ENCODE measurements at regions of chr10 and their contacts with region 1.

Region 1: DNA sequence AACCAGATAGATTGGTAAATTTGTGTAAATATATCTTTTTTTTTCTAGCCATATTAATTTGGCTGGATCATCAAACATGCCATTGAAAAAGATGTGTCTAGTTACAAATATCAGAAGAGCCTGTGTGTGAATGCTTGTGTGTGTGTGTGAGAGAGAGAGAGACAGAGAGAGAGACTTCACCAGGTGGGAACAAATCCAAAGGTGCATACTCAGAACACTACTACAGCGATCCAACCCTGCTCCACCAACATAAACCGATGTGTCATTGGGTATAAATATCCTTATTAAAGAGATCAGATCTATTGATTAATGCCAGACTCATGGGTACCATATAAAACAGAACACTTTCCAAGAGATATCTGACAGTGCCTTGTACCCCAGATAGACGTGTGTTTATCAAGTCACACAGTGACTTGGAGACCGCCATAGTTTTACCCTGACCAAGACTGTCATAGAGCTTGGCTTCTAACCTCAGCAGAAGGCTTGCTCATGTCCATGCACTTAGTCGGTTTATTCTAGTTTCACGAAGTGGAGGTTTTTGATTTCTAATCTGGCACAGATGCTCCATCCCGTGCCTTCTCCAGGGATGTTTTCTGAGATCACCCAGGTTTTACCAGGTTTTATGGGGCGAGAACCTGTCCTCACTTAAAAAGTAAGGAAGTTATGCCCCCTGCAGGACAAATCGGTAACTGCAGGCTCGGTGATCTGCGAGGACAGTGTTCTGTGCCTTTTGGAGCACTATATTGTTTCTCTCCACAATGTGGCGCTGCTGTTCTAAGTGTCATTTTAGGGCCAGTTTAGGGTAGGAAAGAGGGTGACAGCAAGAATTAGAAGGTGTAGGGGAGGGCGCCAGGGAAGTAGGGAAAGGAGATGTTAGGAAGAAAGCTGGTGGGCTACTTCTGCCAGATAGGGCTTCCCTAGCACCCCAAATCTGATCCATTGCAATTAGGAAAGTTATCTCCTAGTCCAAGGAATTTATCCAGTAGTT is 29.3 kb upstream of the WNT8B start:
- DNase-seq: peak; percentile 30
- H3K4me3 ChIP-seq: no peak overlapping the region
- H3K27ac ChIP-seq: no peak overlapping the region
- H3K4me1 ChIP-seq: peaks cover 0 to 20% (median 2%) of the 10 kb centered on the region in 3 donors
- H3K27me3 ChIP-seq: no peaks in the 10 kb centered on the region
- CTCF ChIP-seq: peak; percentile 93 to 100 (median 100)
- POLR2A ChIP-seq: no peak

Region 2: DNA sequence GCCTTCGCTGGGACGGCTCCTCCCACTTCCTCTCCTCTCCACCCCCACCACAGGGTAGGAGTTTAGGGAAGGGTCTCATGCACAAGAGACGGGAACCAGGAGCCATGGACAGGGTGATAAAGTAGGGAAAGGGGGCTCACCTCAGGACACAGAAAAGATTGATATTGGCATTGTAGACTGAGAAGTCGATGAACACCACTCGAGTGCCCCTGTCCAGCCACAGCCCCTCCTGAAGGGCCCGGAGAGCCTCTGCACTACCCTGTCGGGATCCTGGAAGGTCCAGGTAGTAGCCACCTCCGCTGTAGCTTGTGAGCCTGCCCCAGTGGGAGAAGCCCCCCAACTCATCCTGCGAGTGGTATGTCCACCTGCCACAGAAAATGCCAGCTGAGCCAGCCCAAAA is 136.3 kb before region 1 on chr10:
- intact Hi-C with region 1: no loop called
- DNase-seq: no peak
- H3K4me3 ChIP-seq: no peak overlapping the region
- H3K27ac ChIP-seq: no peak overlapping the region
- H3K4me1 ChIP-seq: no peaks in the 10 kb centered on the region
- H3K27me3 ChIP-seq: peaks cover 0 to 59% (median 0%) of the 10 kb centered on the region in 4 donors
- CTCF ChIP-seq: no peak
- POLR2A ChIP-seq: no peak

Region 3: DNA sequence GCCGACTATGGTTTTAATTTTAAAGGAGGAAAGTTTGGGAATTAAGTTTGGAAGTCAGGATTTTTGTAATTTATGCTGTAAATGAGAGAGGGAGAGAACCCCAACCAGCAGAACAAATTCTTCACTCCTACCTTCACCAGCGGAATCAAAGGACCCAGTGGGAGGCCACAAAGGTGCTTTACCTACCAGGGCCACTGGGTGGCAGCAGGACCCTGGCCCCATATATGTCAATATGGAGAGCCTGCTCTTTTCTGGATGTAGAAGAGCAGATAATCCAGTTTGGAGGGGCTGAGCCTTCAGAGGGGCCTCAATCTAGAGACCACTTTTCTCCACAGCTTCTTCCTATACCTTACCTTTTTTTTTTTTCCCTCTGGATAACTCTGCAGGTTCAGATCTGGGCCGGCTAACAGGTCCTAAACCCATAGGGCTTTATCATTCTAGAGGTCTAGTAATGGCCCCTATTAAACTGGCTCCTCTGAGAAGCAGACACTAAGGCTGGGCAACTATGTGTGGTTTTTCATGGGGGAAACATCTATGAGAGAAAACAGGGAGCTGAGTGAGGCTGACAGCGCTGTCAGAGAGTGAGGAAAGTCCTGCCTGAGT is 95.0 kb before region 1 on chr10:
- intact Hi-C with region 1: loop called (anchors 2 kb)
- DNase-seq: no peak
- H3K4me3 ChIP-seq: no peak overlapping the region
- H3K27ac ChIP-seq: no peak overlapping the region
- H3K4me1 ChIP-seq: peaks cover 0 to 9% (median 0%) of the 10 kb centered on the region in 3 donors
- H3K27me3 ChIP-seq: peaks cover 0 to 16% (median 0%) of the 10 kb centered on the region in 4 donors
- CTCF ChIP-seq: peak; percentile 72 to 92 (median 90)
- POLR2A ChIP-seq: no peak

Region 4: DNA sequence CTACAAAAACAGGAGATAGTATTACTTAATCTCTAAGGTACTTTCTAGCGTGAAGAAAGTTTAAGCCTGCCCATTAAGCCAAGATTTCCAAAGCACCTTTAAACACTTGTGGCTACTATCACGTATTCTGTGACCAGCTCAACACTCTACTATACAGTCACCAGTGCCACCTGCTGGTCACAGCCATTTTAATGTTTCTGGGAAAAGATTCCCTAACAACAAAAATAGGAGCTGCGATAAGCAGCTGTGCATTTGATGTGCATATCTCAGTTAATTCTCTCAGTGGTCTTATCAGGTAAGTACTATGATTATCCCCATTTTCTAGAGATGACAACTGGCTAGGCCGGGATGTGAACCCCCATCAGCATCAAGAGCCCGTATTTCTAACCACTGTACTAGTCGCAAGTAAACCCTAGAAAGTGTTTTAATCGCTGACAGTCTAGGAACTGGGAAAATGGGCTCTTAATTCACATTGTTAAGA is 85.3 kb after region 1 on chr10:
- intact Hi-C with region 1: loop called (anchors 10 kb)
- DNase-seq: no peak
- H3K4me3 ChIP-seq: peak overlapping the region; percentile 14 to 64 (median 46)
- H3K27ac ChIP-seq: no peak overlapping the region
- H3K4me1 ChIP-seq: peaks cover 6 to 16% (median 10%) of the 10 kb centered on the region in 3 donors
- H3K27me3 ChIP-seq: peaks cover 0 to 12% (median 0%) of the 10 kb centered on the region in 4 donors
- CTCF ChIP-seq: peak; percentile 36 to 75 (median 66)
- POLR2A ChIP-seq: no peak